WTC11 (cell line): ENCODE measurements at regions of chr19 and their contacts with region 1.

Region 1: GRCh38 chr19:5772416-5772815 is 12.1 kb downstream of the PRR22 start:
- DNase-seq: no peak
- ATAC-seq: no peak
- H3K4me3 Mint-ChIP-seq: no peak overlapping the region
- H3K27ac Mint-ChIP-seq: no peak overlapping the region
- H3K4me1 Mint-ChIP-seq: no peaks in the 10 kb centered on the region
- H3K27me3 Mint-ChIP-seq: peaks cover 10% of the 10 kb centered on the region
- CTCF ChIP-seq: no peak

Region 2: DNA sequence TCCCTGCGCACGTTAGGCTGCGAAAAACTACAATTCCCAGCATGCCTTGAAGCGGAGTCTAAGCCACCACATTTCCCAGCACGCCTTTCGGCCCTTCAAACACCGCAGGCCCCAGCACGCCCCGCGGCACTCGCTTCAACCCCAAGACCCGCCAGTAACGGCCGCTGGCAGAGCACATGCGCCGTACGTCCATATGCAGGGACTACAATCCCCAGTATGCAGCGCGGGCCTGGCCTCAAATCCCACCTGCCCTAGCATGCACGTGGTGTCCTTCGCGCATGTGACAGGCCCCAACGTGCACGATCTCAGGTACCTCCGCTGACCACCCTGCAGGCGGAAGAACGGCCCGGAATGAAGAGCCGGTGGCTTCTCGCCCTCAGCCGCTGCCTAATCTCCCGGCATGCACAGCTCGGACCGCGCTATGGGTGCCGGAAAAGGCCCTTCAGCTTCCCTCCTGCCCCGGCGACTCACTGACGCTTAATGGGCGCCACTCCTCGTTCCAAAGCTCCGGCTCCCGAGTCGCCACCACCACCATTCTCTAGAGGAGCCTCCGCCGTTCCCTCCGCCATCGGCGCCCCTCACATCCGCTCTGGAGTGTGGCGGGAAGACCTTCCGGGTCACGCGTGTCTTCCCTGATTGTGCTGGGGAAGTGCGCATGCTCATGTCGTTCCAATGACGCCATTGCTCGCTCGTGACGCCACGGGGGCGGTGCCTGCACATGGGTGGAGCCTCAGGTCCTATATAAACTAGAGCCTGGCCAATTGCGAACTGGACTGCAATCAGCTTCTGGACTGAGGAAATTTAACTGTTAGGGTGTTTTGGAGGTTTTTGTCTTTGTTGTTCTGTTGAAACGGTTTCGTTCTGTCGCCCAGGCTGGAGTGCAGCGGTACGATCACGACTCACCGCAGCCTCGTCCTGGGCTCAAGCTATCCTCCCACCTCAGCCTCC is 18.4 kb after region 1 on chr19 and contains the start of gene DUS3L:
- CTCF ChIA-PET with region 1: interaction called, 17 read pairs
- POLR2A ChIA-PET with region 1: no interaction called
- DNase-seq: peak; percentile 96
- ATAC-seq: peak; percentile 96
- H3K4me3 Mint-ChIP-seq: peak within 1 kb of the TSS; percentile 98
- H3K27ac Mint-ChIP-seq: peak within 1 kb of the TSS; percentile 100
- H3K4me1 Mint-ChIP-seq: peaks cover 5% of the 10 kb centered on the region
- H3K27me3 Mint-ChIP-seq: no peaks in the 10 kb centered on the region; the same call in 1 of the 2 replicates
- CTCF ChIP-seq: no peak
- total RNA-seq, gene DUS3L: 30.6 to 39.3 TPM (median 34.6 TPM) in 3 replicates